Panc1 (cell line): ENCODE measurements at regions of chr1 and their contacts with region 1.

Region 1: GRCh38 chr1:225972344-225973152 is 26.6 kb downstream of the SDE2 start:
- DNase-seq: no peak
- ATAC-seq: no peak
- H3K4me3 ChIP-seq: no peak overlapping the region
- H3K27ac ChIP-seq: peak overlapping the region; percentile 14; the same call in 1 of the 2 replicates
- H3K4me1 ChIP-seq: peaks cover 6% of the 10 kb centered on the region; the same call in 1 of the 2 replicates
- H3K27me3 ChIP-seq: no peaks in the 10 kb centered on the region
- CTCF ChIP-seq: no peak

Region 2: DNA sequence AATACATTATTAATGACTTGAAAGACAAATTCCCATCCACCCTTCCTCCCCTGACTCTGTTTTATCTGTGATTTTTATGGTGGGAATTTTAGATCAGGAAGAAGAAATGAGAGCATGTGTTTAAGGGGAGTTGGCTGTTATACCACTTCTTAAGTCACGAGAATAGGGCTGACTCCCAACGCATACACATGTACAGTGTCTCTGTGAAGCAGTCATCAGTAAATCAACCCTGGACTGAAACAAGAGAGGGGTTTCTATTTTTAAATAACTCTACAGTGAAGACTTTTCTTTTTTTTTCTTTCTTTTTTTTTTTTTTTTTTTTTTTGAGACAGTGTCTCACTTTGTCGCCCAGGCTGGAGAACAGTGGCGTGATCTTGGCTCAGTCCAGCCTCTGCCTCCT is 650.8 kb before region 1 on chr1:
- CTCF ChIA-PET with region 1: no interaction called
- POLR2A ChIA-PET with region 1: interaction called, 10 read pairs
- in situ Hi-C with region 1: no loop called
- intact Hi-C with region 1: no loop called
- DNase-seq: no peak
- ATAC-seq: no peak
- H3K4me3 ChIP-seq: no peak overlapping the region
- H3K27ac ChIP-seq: no peak overlapping the region
- H3K4me1 ChIP-seq: no peaks in the 10 kb centered on the region
- H3K27me3 ChIP-seq: peaks cover 4% of the 10 kb centered on the region; the same call in 1 of the 2 replicates
- CTCF ChIP-seq: no peak

Region 3: DNA sequence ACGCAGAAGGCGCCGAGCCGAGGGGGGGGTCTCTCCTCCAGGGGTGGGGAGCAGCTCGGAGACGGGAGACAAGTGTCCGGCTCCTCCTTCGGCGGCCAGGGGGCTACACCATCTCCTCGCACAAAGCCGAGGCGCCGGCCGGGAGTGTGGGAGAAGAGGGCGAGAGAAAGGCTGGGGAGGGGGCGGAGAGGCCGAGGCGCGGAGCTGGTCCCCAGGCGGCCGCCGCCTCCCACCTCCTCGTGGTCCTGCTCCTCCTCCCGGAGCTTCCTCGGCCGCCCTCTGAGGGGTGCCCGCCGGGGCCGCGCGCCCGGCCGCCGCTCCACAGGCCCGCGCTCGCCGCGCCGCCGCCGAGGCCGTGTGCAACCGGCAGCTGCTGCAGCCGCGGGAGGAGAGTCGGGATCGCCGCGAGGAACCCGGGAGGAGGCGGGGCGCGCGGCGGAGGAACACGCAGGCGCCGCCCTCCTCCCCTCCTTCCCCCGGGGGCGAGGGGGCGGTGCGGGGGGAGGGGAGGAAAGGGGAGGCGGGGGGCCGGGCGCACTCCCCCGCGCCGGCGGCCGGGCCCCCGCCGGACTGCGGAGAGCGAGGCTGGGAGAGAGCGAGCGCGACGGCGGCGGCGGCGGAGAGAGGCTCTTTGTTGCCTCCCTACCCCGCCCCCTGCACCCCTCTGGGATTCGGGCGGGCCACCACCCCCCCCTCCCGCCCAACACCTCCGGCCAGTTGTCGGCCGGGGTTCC is 319.7 kb before region 1 on chr1 and contains the start of gene ENAH:
- CTCF ChIA-PET with region 1: no interaction called
- POLR2A ChIA-PET with region 1: no interaction called
- in situ Hi-C with region 1: no loop called
- intact Hi-C with region 1: no loop called
- DNase-seq: no peak
- ATAC-seq: peak; percentile 85
- H3K4me3 ChIP-seq: peak within 1 kb of the TSS; percentile 89 to 100
- H3K27ac ChIP-seq: peak within 1 kb of the TSS; percentile 99
- H3K4me1 ChIP-seq: peaks cover 55% of the 10 kb centered on the region
- H3K27me3 ChIP-seq: no peaks in the 10 kb centered on the region
- CTCF ChIP-seq: no peak
- total RNA-seq, gene ENAH: 133 TPM

Region 4: GRCh38 chr1:226293553-226293920 is 321.0 kb after region 1 on chr1:
- CTCF ChIA-PET with region 1: no interaction called
- POLR2A ChIA-PET with region 1: no interaction called
- in situ Hi-C with region 1: no loop called
- intact Hi-C with region 1: no loop called
- DNase-seq: no peak
- ATAC-seq: no peak
- H3K4me3 ChIP-seq: no peak overlapping the region
- H3K27ac ChIP-seq: no peak overlapping the region
- H3K4me1 ChIP-seq: no peaks in the 10 kb centered on the region
- H3K27me3 ChIP-seq: no peaks in the 10 kb centered on the region
- CTCF ChIP-seq: no peak